HEK293T (cell line): ENCODE measurements at regions of chr1 and their contacts with region 1.

Region 1: DNA sequence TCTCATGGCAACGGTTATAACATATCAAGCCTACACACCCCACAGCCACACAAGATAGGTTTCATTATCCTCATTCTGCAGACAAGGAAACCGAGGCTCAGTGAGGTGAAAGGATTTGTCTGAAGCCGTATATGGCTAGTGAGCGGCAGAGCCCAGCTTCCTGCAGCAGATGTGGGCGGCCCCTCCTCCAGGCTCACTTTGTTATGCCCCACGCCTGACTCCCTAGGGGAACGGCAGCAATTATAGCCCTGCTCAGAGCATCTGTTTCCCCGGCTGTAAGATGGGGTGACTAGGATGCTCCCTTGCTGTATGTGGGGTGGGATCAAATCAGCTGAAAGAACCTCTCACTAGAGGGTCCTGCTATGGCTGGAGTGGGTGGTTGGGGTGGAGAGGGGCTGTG is 22.1 kb downstream of the GRHL3 start:
- DNase-seq: no peak

Region 2: DNA sequence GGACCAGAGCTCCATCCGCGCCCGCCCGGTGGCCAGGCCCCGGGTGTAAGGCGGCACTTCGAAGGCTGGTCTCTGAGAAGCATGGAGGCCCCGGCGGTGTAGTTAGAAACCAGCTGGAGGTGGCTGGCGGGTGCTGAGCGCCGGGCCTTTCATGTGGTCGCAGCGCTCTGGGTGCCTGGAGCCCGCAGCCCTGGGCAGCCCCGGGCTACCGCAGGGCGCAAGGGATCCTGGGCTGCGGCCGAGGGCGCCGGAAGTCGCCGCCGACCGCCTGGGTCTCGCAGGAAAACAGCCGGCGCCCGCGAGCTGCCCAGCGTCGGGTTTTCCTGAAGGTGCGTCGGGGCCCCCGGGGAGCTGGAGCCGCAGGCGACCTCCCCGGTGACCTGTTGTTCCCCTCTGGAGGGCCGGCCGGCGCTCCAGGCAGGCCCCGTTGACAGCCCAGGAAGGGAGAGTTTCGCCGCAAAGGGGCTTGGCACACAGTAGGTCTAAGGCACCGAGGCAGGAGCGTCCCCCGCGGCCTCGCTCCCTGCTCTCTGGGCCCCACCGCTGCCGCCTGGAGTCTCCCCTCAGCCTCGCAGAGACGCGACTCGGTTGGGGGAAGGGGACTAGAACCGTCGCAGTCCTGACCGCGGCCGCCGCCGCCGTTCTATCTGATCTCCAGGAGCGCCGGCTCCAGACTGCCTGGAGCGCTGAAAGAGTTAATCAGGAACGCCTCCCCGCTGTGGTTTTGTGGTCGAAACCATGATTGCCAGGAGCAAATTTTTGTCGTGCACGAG is 19.4 kb before region 1 on chr1:
- CTCF ChIA-PET with region 1: no interaction called
- POLR2A ChIA-PET with region 1: interaction called, 10 read pairs
- DNase-seq: peak; percentile 76